ENCODE measurements at regions of chr1 and their contacts with region 1.

Region 1: GRCh38 chr1:94335950-94336349 is 82.2 kb upstream of the ABCD3 start:
- DNase-seq: peak; percentile 81
- H3K4me3 ChIP-seq: no peak overlapping the region
- H3K27ac ChIP-seq: no peak overlapping the region
- H3K4me1 ChIP-seq: no peaks in the 10 kb centered on the region
- H3K27me3 ChIP-seq: no peaks in the 10 kb centered on the region
- CTCF ChIP-seq: peak; percentile 83

Region 2: GRCh38 chr1:94025383-94026340 is 310.3 kb before region 1 on chr1:
- intact Hi-C with region 1: loop called (anchors 5 kb)
- DNase-seq: peak; percentile 44
- H3K4me3 ChIP-seq: no peak overlapping the region
- H3K27ac ChIP-seq: no peak overlapping the region
- H3K4me1 ChIP-seq: no peaks in the 10 kb centered on the region
- H3K27me3 ChIP-seq: no peaks in the 10 kb centered on the region
- CTCF ChIP-seq: peak; percentile 77

Region 3: DNA sequence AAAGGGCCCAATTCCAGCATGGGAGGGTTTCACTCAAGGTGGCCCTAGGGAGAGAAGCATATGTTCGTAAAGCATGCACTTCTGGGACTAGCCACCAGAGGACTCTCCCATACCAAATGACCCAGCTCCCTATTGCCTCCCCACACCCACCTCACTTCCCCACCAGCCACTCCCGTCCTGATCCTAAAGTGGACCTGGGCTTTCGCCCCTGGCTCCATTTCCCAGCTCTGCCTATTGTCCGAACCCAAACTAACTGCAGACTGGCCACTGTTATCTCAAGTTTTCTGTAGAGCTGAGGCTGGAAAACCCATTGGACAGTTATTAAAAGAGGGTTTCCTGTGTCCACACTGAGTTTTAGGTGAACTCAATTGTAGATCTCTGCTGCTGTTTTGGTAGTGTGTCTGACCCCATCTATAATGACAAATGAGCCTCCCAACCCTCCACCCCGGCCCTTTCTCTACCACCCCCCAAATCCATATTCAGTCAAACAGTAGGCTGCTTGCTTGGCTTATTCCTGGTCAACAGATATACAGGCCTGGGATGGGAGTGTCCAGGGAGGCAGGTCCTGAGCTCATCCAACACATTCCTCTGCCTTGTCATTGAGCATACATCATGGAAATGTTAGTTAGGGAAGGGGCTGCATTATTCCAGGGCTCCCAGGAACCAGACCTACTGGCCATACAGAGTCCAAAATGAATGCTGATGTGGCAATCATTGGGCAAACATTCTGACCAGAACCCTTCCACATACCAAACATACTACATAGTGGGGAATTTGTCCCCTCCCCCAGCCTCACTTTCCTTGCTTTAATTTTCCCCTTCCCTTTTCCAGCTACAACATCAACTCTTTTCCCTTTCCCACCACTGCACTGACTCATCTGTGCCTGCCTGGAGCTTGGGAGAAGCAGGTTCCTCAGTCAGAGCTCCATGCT is 274.2 kb before region 1 on chr1:
- intact Hi-C with region 1: loop called (anchors 2 kb)
- DNase-seq: peak; percentile 75
- H3K4me3 ChIP-seq: no peak overlapping the region
- H3K27ac ChIP-seq: no peak overlapping the region
- H3K4me1 ChIP-seq: no peaks in the 10 kb centered on the region
- H3K27me3 ChIP-seq: no peaks in the 10 kb centered on the region
- CTCF ChIP-seq: peak; percentile 73

Region 4: DNA sequence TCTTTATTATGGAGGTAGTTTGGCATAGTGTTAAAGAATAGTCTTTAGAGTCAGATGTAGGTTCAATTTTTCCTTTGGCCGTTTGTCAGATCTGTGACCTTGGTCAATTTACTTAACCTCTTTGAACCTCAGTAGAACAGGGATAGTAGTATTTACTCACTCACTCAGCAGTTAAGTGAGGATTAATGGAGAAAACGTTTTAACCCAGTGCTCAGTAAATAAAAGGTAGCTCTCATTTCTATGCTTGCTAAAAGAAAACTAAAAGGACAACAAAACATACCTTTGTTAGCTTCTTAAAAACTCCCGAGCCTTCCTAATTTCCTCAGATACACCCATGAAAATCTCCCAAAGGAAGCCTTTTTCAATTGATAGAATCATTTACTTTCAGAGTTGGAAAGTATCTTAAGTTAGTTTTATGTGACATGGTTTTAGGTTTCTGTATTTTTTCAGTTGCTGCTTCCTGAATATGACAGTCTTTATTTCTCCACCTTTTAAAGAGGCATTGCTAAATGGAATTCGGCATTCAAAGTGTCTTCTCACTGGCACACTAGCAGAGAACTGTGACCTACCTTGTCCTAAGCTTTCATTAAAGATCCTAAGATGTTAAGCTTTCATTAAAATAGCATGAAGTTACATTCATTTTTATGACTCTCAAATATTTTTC is 90.0 kb after region 1 on chr1:
- intact Hi-C with region 1: no loop called
- DNase-seq: no peak
- H3K4me3 ChIP-seq: no peak overlapping the region
- H3K27ac ChIP-seq: peak overlapping the region; percentile 15
- H3K4me1 ChIP-seq: no peaks in the 10 kb centered on the region
- H3K27me3 ChIP-seq: no peaks in the 10 kb centered on the region
- CTCF ChIP-seq: no peak

Region 5: GRCh38 chr1:94463765-94464330 is 127.9 kb after region 1 on chr1:
- intact Hi-C with region 1: loop called (anchors 5 kb)
- DNase-seq: peak; percentile 36
- H3K4me3 ChIP-seq: no peak overlapping the region
- H3K27ac ChIP-seq: peak overlapping the region; percentile 7
- H3K4me1 ChIP-seq: no peaks in the 10 kb centered on the region
- H3K27me3 ChIP-seq: no peaks in the 10 kb centered on the region
- CTCF ChIP-seq: peak; percentile 47